Activated CD8-positive, alpha-beta T cell treated with anti-CD3 and anti-CD28 coated beads for 36 hours (primary cell): ENCODE measurements at regions of chr1 and their contacts with region 1.

Region 1: DNA sequence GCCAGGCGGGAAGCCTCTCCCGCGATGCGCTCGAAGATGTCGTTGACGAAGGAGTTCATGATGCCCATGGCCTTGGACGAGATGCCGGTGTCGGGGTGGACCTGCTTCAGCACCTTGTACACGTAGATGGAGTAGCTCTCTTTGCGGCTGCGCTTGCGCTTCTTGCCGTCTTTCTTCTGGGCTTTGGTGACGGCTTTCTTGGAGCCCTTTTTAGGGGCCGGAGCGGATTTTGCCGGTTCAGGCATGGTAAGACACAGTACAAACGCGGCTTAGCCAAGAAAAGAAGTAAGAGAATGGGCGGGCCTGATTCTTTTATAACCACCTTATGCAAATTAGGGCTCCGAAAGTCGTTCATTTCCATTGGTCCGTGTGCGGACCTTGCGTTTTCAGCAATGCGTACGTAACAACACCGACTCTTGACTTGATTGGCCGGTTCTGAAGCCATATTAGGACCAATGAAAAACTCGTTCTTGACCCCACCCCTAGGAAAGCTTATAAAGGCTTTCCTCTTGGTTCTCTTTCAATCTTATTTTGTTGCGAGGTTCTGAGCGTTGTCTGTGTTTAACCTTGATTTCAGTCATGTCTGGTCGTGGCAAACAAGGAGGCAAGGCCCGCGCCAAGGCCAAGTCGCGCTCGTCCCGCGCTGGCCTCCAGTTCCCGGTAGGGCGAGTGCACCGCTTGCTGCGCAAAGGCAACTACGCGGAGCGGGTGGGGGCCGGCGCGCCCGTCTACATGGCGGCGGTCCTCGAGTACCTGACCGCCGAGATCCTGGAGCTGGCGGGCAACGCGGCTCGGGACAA is 12.8 kb upstream of the BOLA1 start:
- DNase-seq: peak; percentile 88
- ATAC-seq: peak; percentile 57
- H3K4me3 Mint-ChIP-seq: no peak overlapping the region
- H3K27ac Mint-ChIP-seq: no peak overlapping the region
- H3K4me1 Mint-ChIP-seq: peaks cover 15% of the 10 kb centered on the region
- H3K27me3 Mint-ChIP-seq: peaks cover 2% of the 10 kb centered on the region
- CTCF ChIP-seq: no peak

Region 2: GRCh38 chr1:149844101-149844500 is 42.5 kb before region 1 on chr1:
- CTCF ChIA-PET with region 1: interaction called, 5 read pairs
- POLR2A ChIA-PET with region 1: interaction called, 325 read pairs
- intact Hi-C with region 1: no loop called
- DNase-seq: peak; percentile 45
- ATAC-seq: no peak
- H3K4me3 Mint-ChIP-seq: peak overlapping the region; percentile 88
- H3K27ac Mint-ChIP-seq: peak overlapping the region; percentile 86
- H3K4me1 Mint-ChIP-seq: peaks cover 42% of the 10 kb centered on the region
- H3K27me3 Mint-ChIP-seq: no peaks in the 10 kb centered on the region
- CTCF ChIP-seq: no peak

Region 3: GRCh38 chr1:149917571-149918144 is 31.1 kb after region 1 on chr1 and contains the start of gene SV2A:
- CTCF ChIA-PET with region 1: interaction called, 4 read pairs
- POLR2A ChIA-PET with region 1: interaction called, 61 read pairs
- intact Hi-C with region 1: no loop called
- DNase-seq: peak; percentile 66
- ATAC-seq: peak; percentile 86
- H3K4me3 Mint-ChIP-seq: peak within 1 kb of the TSS; percentile 81
- H3K27ac Mint-ChIP-seq: peak within 1 kb of the TSS; percentile 69
- H3K4me1 Mint-ChIP-seq: peaks cover 33% of the 10 kb centered on the region
- H3K27me3 Mint-ChIP-seq: no peaks in the 10 kb centered on the region
- CTCF ChIP-seq: no peak
- total RNA-seq, gene SV2A: 8.2 to 9.1 TPM

Region 4: GRCh38 chr1:149937060-149937705 is 50.6 kb after region 1 on chr1:
- CTCF ChIA-PET with region 1: no interaction called
- POLR2A ChIA-PET with region 1: interaction called, 62 read pairs
- intact Hi-C with region 1: no loop called
- DNase-seq: no peak
- ATAC-seq: no peak
- H3K4me3 Mint-ChIP-seq: peak overlapping the region; percentile 5
- H3K27ac Mint-ChIP-seq: peak overlapping the region; percentile 32
- H3K4me1 Mint-ChIP-seq: peaks cover 26% of the 10 kb centered on the region
- H3K27me3 Mint-ChIP-seq: no peaks in the 10 kb centered on the region
- CTCF ChIP-seq: no peak

Region 5: GRCh38 chr1:150022357-150022756 is 135.8 kb after region 1 on chr1:
- CTCF ChIA-PET with region 1: no interaction called
- POLR2A ChIA-PET with region 1: no interaction called
- intact Hi-C with region 1: no loop called
- DNase-seq: no peak
- ATAC-seq: no peak
- H3K4me3 Mint-ChIP-seq: no peak overlapping the region
- H3K27ac Mint-ChIP-seq: no peak overlapping the region
- H3K4me1 Mint-ChIP-seq: no peaks in the 10 kb centered on the region
- H3K27me3 Mint-ChIP-seq: peaks cover 7% of the 10 kb centered on the region
- CTCF ChIP-seq: no peak

Region 6: GRCh38 chr1:150067184-150068036 is 180.8 kb after region 1 on chr1 and contains the start of gene VPS45:
- CTCF ChIA-PET with region 1: interaction called, 5 read pairs
- POLR2A ChIA-PET with region 1: interaction called, 48 read pairs
- intact Hi-C with region 1: no loop called
- DNase-seq: peak; percentile 94
- ATAC-seq: peak; percentile 97
- H3K4me3 Mint-ChIP-seq: peak within 1 kb of the TSS; percentile 96
- H3K27ac Mint-ChIP-seq: peak within 1 kb of the TSS; percentile 98
- H3K4me1 Mint-ChIP-seq: peaks cover 27% of the 10 kb centered on the region
- H3K27me3 Mint-ChIP-seq: no peaks in the 10 kb centered on the region
- CTCF ChIP-seq: no peak
- total RNA-seq, gene VPS45: 19.4 to 22.8 TPM

Region 7: GRCh38 chr1:150089846-150090520 is 203.4 kb after region 1 on chr1:
- CTCF ChIA-PET with region 1: no interaction called
- POLR2A ChIA-PET with region 1: no interaction called
- intact Hi-C with region 1: no loop called
- DNase-seq: no peak
- ATAC-seq: no peak
- H3K4me3 Mint-ChIP-seq: no peak overlapping the region
- H3K27ac Mint-ChIP-seq: no peak overlapping the region
- H3K4me1 Mint-ChIP-seq: peaks cover 17% of the 10 kb centered on the region
- H3K27me3 Mint-ChIP-seq: no peaks in the 10 kb centered on the region
- CTCF ChIP-seq: no peak

Region 8: GRCh38 chr1:150162862-150163706 is 276.5 kb after region 1 on chr1:
- CTCF ChIA-PET with region 1: interaction called, 3 read pairs
- POLR2A ChIA-PET with region 1: interaction called, 27 read pairs
- intact Hi-C with region 1: no loop called
- DNase-seq: peak; percentile 63
- ATAC-seq: peak; percentile 57
- H3K4me3 Mint-ChIP-seq: peak overlapping the region; percentile 13
- H3K27ac Mint-ChIP-seq: peak overlapping the region; percentile 25
- H3K4me1 Mint-ChIP-seq: peaks cover 46% of the 10 kb centered on the region
- H3K27me3 Mint-ChIP-seq: no peaks in the 10 kb centered on the region
- CTCF ChIP-seq: no peak

Region 9: DNA sequence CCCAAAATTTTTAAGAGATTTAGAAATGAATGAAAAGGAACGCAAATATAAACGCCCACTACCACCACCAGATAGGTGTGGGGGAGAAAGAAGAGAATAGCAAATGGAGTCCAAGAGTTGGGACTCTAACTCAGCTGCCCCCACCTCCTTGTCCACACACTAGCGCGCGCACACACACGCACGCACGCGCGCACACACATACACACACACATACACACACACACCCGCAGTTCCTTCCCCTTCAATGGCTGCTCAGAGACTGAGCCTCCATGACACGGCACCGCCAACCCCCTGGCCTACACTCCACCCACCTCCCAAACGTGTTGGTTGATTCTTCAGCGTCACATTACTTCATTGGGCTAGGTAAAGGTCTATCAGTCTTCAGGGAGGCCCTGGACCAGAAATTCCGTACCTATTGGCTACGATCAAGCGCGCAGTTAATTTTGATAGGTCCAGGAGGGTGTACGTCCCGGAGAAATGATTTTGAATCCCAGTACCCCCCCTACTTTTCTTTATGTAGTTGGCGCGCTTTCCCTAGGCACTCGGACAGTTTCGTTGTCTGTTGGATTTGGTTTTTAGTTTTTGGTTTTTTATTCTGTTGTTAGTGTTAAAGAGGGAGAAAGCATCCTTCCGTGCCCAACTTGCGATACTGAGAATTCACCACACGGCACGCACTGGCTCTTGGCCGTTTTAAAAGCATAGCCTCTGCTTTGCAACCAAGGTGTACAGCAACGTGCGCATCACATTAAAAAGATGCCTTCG is 349.4 kb after region 1 on chr1 and contains the start of gene ANP32E:
- CTCF ChIA-PET with region 1: no interaction called
- POLR2A ChIA-PET with region 1: interaction called, 21 read pairs
- intact Hi-C with region 1: no loop called
- DNase-seq: peak; percentile 96
- ATAC-seq: peak; percentile 87
- H3K4me3 Mint-ChIP-seq: no peak within 1 kb of the TSS
- H3K27ac Mint-ChIP-seq: no peak within 1 kb of the TSS
- H3K4me1 Mint-ChIP-seq: peaks cover 12% of the 10 kb centered on the region
- H3K27me3 Mint-ChIP-seq: no peaks in the 10 kb centered on the region
- CTCF ChIP-seq: no peak
- total RNA-seq, gene ANP32E: 174 to 185 TPM